ENCODE measurements at regions of chr10 and their contacts with region 1.

Region 1: DNA sequence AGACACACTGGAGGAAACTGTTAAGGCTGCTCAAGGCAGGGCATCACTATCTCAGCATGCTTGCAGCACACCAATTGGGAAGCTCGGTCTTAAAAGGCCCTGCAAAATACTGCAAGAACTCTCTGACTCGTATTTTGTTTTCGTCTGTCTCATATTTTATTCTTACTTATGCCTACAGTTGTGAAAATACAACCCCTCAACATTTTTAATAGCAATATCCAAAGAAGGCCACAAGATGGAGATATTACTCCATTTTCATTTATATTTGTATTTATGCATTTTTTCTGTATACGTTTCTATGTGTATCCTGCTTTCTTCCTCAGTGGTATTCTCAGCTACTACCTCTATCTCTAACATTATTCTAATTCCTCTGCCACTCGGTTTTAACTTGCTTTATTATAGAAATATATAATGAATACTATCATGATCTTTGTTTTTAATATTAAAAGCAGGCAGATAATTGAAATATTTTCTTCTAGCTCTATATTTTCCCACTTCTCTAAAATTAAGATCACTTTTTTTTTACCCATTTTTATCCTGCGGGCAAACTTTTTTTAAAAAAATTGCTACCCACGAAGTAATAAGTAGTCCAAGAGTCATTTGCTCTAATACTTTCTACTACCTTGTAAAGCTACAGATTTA is 10.0 kb downstream of the DNAJC1 start:
- DNase-seq: peak in 2 of 35 experiments; percentile 14 to 71
- ATAC-seq: peak in 1 of 4 experiments; percentile 57
- H3K4me3 ChIP-seq: no peak overlapping the region
- H3K4me3 Mint-ChIP-seq: no peak overlapping the region
- H3K27ac ChIP-seq: no peak overlapping the region
- H3K27ac Mint-ChIP-seq: no peak overlapping the region
- H3K4me1 ChIP-seq: peaks cover 3 to 4% of the 10 kb centered on the region in 2 experiments
- H3K4me1 Mint-ChIP-seq: peaks cover 13 to 26% (median 24%) of the 10 kb centered on the region in 3 donors
- H3K27me3 ChIP-seq: no peaks in the 10 kb centered on the region
- H3K27me3 Mint-ChIP-seq: no peaks in the 10 kb centered on the region

Region 2: DNA sequence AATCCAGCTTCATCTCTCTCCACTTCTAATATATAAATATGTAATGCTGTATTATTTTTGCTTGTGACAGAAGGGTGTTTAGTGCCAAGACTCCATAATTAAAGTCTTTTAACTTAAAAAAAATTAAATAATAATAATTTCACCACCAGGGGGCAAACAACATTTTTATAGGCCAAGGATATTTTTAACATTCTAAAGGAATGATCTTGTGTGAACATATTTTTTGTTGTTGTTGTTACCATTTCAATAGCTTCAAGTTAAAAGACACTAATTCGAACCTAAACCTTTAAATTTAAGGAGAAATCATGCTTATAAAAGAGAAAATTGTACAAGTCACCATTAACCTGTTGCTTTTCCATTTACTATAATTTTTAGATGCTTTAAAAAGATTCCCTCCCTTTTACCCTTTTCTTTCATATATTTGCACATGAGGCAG is 17.5 kb after region 1 on chr10:
- CTCF ChIA-PET with region 1: interaction called, 8 to 21 read pairs
- POLR2A ChIA-PET with region 1: interaction called in 1 of 2 experiments, 4 read pairs
- DNase-seq: peak in 1 of 35 experiments; percentile 52
- ATAC-seq: no peak
- H3K4me3 ChIP-seq: no peak overlapping the region
- H3K4me3 Mint-ChIP-seq: no peak overlapping the region
- H3K27ac ChIP-seq: no peak overlapping the region
- H3K27ac Mint-ChIP-seq: no peak overlapping the region
- H3K4me1 ChIP-seq: no peaks in the 10 kb centered on the region
- H3K4me1 Mint-ChIP-seq: peaks cover under 1 to 4% (median 3%) of the 10 kb centered on the region in 3 donors
- H3K27me3 ChIP-seq: peaks cover 0 to 3% of the 10 kb centered on the region in 2 experiments
- H3K27me3 Mint-ChIP-seq: peaks cover 0 to 5% of the 10 kb centered on the region in 2 donors

Measured in T-cell (primary cell).